GM13977 (cell line): ENCODE measurements at regions of chr7 and their contacts with region 1.

Region 1: DNA sequence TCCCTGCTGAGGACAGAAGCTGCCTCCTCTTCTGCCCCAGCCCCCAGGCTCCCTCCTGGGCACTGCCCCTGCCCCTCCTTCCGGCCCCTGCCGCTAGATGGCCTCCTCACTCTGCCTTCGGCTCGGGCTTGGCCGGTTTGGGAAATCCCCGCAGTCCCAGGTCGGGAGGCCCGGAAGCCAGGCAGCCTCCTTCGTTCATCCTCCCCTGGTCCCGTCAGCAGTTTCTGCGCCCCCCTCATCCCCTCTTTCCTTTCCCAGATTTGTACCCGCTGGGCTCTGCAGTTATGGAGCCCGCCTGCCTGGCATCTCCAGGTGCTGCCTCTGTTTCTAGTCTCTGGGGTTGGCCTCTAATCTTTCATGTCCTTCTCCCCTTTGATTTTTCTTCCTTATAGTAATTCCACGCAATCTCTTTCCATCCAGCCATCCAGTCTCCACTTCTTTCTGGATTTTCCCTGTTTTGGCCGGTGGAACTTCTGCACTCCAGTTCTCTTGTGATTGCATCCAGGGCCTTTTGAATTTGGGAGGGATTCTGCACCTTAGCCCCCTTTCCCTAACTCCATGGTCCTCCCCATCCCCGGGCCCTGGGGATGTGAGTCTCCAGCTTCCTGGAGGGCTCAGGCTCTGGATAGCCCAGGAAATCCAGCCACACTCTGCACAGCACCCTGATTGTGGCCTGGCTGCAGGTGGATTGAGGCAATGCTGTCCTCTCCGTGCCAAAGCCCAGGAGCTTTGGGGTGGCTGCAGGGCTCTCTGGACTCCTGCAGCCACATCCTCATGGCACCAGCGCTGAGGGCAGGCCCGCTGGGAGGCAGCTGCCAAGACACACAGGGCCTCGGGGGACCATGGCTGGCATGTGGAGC is 3.3 kb upstream of the SHH start:
- DNase-seq: peak; percentile 90
- CTCF ChIP-seq: peak; percentile 97

Region 2: DNA sequence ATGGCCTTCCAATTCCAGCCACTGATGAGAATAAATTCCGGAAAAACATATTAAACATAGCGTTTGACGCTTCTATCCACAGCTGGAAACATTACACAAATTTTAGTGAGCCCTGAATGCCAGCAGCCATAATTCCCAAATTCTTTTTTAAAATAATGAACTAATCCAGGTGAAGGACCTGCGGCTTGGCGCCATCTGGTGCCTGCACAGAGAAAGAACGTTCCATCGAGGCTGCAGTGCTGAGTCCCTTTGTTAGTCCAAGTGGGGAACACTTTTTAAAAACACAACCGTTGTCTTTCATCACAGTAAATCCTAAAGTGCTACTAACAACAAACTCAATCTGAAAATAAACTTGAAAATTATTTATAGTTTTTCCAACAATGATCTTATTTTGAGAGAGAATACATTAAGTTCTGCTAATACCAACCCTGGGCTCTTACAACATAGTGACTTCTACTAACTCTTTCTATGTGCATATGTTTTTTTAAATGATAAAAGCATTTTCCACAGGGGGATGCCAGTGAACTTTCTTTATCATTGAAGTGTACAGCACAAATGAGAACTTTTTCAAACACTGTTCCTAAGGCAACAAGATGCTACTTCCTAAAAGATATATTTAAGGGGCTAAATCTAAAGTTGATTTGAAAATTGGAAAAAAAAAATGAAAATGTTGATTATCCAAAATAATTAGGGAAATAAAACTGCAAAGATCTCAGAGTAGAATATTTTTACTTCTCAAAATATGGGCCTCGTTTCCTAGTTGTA is 658.1 kb after region 1 on chr7:
- in situ Hi-C with region 1: loop called (anchors 25 kb)
- DNase-seq: peak; percentile 73
- CTCF ChIP-seq: peak; percentile 75